ENCODE measurements at regions of chr1 and their contacts with region 1.

Region 1: GRCh38 chr1:36764798-36765197 is 269.5 kb downstream of the GRIK3 start:
- DNase-seq: no peak
- ATAC-seq: no peak

Region 2: DNA sequence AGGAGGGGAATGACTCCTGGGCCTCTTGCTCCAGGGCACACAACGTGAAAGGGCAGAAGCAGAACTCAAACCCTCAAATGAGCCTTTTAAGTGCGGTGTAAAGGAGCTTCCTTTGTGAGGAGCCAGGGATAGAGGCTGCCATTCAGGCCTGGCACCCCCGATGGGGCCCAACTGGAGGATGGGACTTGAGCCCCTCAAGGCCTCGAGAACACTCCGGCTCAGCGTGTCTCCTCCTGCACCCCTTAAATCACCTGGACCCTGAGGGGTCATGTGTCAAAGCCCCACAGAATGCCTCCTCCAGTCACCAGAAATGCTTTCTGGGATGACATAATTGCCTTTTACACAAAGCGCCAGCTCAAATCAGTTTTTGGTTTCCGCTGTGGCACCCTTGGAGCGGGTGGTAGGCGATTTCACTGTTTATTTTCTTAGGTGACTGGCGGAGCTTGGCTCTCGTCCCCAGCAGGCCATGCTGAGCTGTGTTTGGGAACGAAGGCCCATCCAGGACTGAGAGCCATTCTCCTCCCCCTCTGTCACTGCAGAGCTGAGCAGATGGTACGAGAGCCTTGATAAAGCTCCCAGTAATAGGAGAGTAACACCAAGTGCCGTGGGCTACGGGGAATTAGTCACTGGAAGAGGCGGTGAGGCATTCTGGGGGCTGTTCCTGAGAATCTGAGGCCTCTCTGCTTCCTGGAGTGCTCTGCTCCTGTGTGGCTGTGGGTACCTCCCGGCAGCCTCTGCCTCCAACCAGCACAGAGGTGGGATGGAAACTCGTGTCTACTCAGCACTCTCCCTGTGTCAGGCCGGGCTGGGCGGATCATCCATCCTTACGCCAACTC is 106.6 kb after region 1 on chr1:
- intact Hi-C with region 1: no loop called
- DNase-seq: no peak
- ATAC-seq: no peak

Region 3: DNA sequence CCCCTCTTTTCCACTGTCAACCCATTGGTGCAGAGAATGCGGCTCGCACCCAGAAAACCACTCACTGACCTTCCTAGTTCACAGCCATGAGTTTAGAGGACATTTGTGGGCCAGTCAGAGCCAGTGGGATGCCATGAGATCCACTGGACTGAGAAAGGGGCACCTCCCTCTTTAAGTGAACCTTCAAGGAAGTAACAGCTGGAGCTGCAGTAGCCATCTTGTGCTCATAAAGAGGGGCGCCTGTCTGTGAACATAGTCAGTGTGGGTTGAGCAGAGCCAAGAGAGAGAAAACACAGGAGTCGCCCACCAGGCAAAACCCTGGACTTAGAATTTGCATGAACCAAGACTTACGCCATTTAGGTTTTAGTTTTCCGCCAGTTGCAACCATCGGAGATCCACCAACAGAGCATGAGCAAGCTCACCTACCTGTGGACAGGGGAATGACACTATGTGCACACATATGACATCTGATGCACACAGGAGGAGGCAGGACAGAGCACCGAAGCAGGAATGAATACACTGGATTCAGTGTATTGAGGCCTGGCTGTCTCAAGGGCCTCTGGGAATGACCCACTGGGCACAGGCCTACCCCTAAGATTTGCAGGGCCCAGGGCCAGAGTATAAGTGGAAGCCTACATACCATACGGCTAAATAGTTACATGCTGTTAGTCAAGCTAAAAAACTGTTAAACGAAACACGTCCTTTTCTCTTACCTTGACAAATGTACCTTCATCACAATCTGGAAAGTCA is 117.9 kb after region 1 on chr1:
- intact Hi-C with region 1: no loop called
- DNase-seq: no peak
- ATAC-seq: no peak

Region 4: GRCh38 chr1:36913523-36914060 is 148.8 kb after region 1 on chr1:
- intact Hi-C with region 1: loop called (anchors 5 kb)
- DNase-seq: no peak
- ATAC-seq: no peak